Gastrocnemius medialis (tissue), 4 donors: ENCODE measurements at regions of chr22 and their contacts with region 1.

Region 1: GRCh38 chr22:26330966-26331625 is 98.0 kb upstream of the ASPHD2 start:
- DNase-seq: peak in 1 of 2 donors; percentile 46
- ATAC-seq: no peak
- H3K4me3 ChIP-seq: no peak overlapping the region
- H3K27ac ChIP-seq: no peak overlapping the region
- H3K4me1 ChIP-seq: peaks cover 11 to 12% of the 10 kb centered on the region in 2 donors
- H3K27me3 ChIP-seq: no peaks in the 10 kb centered on the region
- CTCF ChIP-seq: peak; percentile 74 to 88 (median 81)
- POLR2A ChIP-seq: no peak

Region 2: DNA sequence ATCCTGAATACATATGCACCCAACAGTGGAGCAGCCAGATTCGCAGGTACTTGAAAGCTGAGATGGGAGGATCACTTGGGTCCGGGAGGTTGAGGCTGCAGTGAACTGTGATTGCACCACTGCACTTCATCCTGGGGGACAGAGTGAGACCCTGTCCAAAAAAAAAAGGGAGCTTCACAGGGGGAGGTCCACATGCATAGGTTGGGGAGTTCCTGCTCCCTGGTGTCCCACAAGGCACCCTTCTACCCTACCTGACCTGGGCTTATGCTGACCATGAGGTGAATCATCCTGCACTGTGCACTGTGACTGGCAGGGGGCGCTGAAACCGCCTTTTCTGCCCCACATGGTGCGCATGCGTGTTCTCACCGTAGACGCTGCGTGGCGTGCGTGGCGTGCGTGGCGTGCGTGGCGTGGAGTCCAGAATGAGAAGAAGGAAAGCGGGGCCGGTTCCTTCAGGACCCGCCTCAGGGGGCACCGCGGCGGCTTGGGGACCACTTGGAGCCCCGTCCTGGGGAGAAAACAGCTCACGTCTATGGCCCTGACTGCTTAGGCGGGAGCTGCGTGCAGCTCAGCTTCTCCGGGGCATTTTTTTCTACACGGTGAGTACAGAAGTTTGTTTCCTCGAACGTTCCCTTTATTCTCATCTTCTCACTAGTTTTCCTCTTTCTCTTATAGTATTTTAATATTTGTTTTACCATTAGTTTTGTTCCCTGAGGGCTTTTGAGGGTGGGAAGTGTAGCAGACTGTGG is 883.2 kb before region 1 on chr22:
- in situ Hi-C with region 1: loop called in 1 of 4 experiments (anchors 25 kb)
- intact Hi-C with region 1: no loop called
- DNase-seq: peak; percentile 67 to 88
- ATAC-seq: peak; percentile 96 to 99
- H3K4me3 ChIP-seq: peak overlapping the region; percentile 68 to 90 (median 73)
- H3K27ac ChIP-seq: peak overlapping the region; percentile 79 to 88 (median 82)
- H3K4me1 ChIP-seq: peaks cover 20 to 33% of the 10 kb centered on the region in 2 donors
- H3K27me3 ChIP-seq: no peaks in the 10 kb centered on the region
- CTCF ChIP-seq: peak; percentile 80 to 92 (median 90)
- POLR2A ChIP-seq: peak; percentile 28 to 30

Region 3: DNA sequence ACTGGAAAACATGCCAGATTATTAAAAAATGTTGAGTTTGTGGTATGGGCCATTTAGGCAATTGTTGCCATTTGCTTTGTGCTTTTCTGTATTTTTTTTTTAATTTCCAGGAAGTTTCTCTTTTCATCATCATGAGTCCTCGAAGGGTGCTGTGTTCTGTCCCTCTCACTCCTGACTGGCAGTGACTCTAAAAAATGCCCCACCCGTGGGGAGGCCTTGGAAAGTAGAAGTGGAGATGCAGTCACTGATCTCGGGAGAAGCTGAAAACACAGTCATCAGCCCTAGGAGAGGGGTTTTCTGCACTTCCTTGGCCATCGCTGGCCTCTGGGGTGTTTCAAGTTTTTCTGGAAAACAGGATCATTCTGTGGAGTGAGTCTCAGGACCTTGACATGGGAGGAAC is 865.1 kb before region 1 on chr22:
- in situ Hi-C with region 1: loop called in 1 of 4 experiments (anchors 25 kb)
- intact Hi-C with region 1: loop called (anchors 5 kb)
- DNase-seq: no peak
- ATAC-seq: no peak
- H3K4me3 ChIP-seq: no peak overlapping the region
- H3K27ac ChIP-seq: no peak overlapping the region
- H3K4me1 ChIP-seq: no peaks in the 10 kb centered on the region
- H3K27me3 ChIP-seq: no peaks in the 10 kb centered on the region
- CTCF ChIP-seq: no peak
- POLR2A ChIP-seq: no peak

Region 4: DNA sequence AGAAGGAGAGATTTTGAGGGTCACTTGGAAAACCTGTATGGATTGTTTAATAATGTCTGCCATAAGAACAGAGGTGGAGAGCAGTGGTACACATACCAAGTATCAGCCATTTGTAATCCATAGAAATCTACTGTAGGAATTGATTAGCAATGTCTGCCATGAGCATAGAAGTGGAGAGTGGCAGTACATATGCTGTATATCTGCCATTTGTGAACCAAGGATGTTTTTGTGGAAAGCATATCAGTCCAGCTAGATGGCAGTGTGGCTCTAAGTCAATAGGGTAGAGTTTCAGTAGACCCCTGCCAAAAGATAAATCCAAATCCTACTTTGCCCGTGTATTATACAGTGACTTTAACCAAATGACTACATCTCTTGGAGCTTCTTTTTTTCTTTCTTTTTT is 244.7 kb before region 1 on chr22:
- in situ Hi-C with region 1: loop called in 1 of 4 experiments (anchors 10 kb)
- intact Hi-C with region 1: loop called (anchors 10 kb)
- DNase-seq: no peak
- ATAC-seq: no peak
- H3K4me3 ChIP-seq: no peak overlapping the region
- H3K27ac ChIP-seq: no peak overlapping the region
- H3K4me1 ChIP-seq: no peaks in the 10 kb centered on the region
- H3K27me3 ChIP-seq: peaks cover 0 to 7% (median 0%) of the 10 kb centered on the region in 3 donors
- CTCF ChIP-seq: peak in 1 of 5 experiments; percentile 22
- POLR2A ChIP-seq: no peak

Region 5: GRCh38 chr22:26172389-26172990 is 158.6 kb before region 1 on chr22:
- in situ Hi-C with region 1: loop called in 2 of 4 experiments (anchors 10 kb)
- intact Hi-C with region 1: loop called (anchors 2 kb)
- DNase-seq: no peak
- ATAC-seq: peak; percentile 46 to 61
- H3K4me3 ChIP-seq: no peak overlapping the region
- H3K27ac ChIP-seq: no peak overlapping the region
- H3K4me1 ChIP-seq: peaks cover 0 to 9% of the 10 kb centered on the region in 2 donors
- H3K27me3 ChIP-seq: peaks cover 28 to 46% (median 32%) of the 10 kb centered on the region in 3 donors
- CTCF ChIP-seq: peak; percentile 32 to 71 (median 41)
- POLR2A ChIP-seq: no peak